Mammary epithelial cell (primary cell): ENCODE measurements at regions of chr14 and their contacts with region 1.

Region 1: DNA sequence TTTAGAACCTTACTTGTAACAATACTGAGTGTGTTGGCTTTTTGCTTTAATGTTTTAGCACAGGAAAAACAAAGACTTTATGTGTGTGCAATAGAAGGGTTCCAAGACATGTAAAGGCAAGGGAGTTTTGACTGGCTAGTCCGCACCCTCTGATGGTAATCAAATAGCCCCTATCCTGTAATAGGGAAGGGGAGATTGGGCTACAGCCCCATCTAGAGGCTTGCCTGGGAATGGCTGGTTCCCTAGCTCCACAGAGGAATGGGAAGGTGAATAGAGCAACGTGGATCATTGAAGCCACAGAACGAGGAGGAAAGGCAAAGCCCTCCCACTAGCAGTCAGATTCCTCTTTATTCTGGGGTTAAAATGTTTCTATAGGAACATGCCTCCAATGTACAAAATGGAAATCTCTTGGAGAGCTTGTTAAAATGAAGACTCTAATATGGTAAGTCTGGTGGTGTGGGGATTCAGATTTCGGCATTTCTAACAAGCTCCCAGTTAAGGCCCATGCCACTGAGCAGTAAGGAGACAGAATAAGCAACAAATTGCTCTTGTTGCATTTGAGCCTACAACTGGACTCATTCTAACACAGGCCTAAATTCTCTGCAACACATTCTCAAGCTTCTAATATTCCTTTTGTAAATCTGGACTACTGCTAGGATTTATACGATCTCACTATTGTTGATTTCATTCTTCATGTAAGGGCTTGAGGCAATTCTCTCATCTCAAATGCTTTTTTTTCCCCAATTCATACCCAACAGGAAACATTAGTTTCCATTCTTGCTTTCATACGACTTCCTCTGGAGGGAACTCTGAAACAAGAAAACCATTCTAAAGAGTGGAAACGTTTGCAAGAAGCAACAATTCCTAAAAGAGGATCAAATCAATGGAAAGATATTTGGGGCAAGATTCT is 57.1 kb downstream of the NIN start:
- DNase-seq: peak; percentile 59
- H3K4me3 ChIP-seq: no peak overlapping the region
- H3K27ac ChIP-seq: peak overlapping the region; percentile 9
- H3K4me1 ChIP-seq: peaks cover 43% of the 10 kb centered on the region
- H3K27me3 ChIP-seq: no peaks in the 10 kb centered on the region
- CTCF ChIP-seq: peak; percentile 92 to 97

Region 2: DNA sequence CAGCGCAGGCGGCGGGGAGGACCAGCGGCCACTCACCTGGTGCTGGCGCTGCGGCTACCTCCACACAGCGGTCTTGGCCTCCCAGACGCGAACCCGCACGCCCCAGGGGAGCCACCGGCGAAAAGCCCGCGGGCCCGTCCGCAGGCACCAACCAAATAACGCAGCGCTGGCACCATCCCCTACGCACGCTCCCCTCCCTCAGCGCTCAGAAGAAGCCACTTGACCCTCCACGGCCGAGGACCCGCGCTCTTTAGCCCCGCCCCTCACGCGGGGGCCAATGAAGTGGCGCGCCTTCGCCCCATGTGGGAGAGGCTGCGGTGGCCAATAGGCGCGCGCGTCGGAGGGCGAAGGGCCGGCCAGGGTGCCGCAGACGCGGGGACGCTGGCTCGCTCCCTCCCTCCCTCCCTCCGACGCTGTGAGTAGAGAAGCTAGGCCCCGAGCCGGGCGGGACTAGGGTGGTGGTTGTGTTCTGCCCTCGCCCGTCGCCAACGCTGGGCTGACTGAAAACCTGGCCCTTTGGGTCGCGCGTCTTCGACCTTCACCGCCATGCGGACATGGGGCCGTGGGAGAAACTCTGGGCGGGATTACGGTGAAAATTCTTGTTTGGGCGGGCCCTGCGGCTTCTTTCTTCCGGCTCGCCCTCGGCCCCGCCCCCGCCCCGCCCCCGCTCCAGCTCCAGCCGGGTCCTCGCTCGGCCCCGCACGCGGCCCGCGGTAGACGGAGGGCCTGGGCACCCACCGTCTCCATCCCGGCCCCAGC is 461.7 kb before region 1 on chr14 and contains the starts of genes DMAC2L and L2HGDH:
- CTCF ChIA-PET with region 1: no interaction called
- dilution Hi-C with region 1: no loop called
- in situ Hi-C with region 1: loop called (anchors 10 to 25 kb)
- intact Hi-C with region 1: no loop called
- DNase-seq: peak; percentile 95
- H3K4me3 ChIP-seq: peak within 1 kb of the TSS; percentile 89 to 99 (median 96)
- H3K27ac ChIP-seq: peak within 1 kb of the TSS; percentile 86
- H3K4me1 ChIP-seq: peaks cover 9% of the 10 kb centered on the region
- H3K27me3 ChIP-seq: no peaks in the 10 kb centered on the region
- CTCF ChIP-seq: no peak
- total RNA-seq, gene DMAC2L: 8.7 to 12.9 TPM
- total RNA-seq, gene L2HGDH: 5.2 to 9.4 TPM

Region 3: GRCh38 chr14:50342221-50343078 is 431.4 kb before region 1 on chr14:
- CTCF ChIA-PET with region 1: interaction called, 3 read pairs
- dilution Hi-C with region 1: no loop called
- in situ Hi-C with region 1: no loop called
- intact Hi-C with region 1: loop called (anchors 1 kb)
- DNase-seq: peak; percentile 75
- H3K4me3 ChIP-seq: no peak overlapping the region
- H3K27ac ChIP-seq: peak overlapping the region; percentile 5
- H3K4me1 ChIP-seq: peaks cover 32% of the 10 kb centered on the region
- H3K27me3 ChIP-seq: no peaks in the 10 kb centered on the region
- CTCF ChIP-seq: peak; percentile 41 to 75

Region 4: DNA sequence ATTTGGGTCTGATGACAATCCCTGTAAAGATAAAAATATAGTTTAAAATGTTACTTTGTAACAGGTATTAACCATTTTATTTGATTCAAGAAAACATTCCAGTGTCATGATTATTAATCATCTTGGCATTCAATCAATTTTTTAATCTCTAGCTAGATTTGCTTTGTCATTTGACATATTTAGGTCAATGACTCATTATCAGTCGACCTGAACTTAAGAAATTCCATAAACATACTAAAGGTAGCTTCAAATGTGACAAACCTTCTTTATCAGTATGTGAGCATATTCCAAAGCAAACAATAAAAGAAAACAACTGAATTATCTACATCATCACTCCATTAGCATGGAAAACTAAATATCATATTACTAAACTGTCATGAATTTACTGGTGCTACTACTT is 326.4 kb before region 1 on chr14:
- CTCF ChIA-PET with region 1: no interaction called
- dilution Hi-C with region 1: no loop called
- in situ Hi-C with region 1: no loop called
- intact Hi-C with region 1: no loop called
- DNase-seq: peak; percentile 65
- H3K4me3 ChIP-seq: no peak overlapping the region
- H3K27ac ChIP-seq: peak overlapping the region; percentile 66
- H3K4me1 ChIP-seq: peaks cover 10% of the 10 kb centered on the region
- H3K27me3 ChIP-seq: no peaks in the 10 kb centered on the region
- CTCF ChIP-seq: no peak

Region 5: DNA sequence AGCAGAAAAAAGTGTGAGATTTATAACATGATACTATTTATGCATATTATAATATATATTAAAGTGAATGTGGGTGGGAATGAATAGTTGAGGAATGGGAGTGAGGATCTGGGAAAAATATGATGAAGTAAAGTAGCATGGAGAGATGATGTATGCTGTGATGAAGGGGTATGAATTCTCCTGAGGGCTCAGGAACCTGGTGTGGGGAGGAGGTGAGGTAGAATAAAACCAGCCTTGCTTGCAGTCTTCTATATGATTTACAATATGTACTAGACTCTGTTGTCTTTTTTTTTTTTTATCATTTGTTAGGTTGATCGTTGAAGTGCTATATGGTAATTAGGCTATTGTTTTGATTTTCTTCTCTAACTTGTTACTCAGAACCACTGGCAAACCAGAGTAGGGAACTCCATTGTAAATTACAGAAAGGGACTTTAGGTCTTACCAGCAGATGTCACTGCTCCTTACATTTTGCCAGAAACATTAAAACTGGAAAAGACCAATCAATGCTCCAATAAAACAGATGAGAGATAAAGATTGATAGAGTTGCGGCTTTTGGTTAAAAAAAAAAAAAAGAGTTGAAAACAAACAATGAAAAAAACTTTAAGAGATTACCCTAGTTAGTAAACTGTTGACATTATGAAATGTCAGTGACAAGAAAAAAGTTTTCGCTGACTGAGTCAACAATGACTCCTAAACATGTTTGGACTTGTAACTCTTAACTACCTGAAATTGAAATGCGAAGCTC is 174.0 kb before region 1 on chr14:
- CTCF ChIA-PET with region 1: interaction called, 10 read pairs
- dilution Hi-C with region 1: no loop called
- in situ Hi-C with region 1: no loop called
- intact Hi-C with region 1: loop called (anchors 1 kb)
- DNase-seq: peak; percentile 76
- H3K4me3 ChIP-seq: peak overlapping the region in 1 of 3 experiments; percentile 32
- H3K27ac ChIP-seq: peak overlapping the region; percentile 61
- H3K4me1 ChIP-seq: peaks cover 27% of the 10 kb centered on the region
- H3K27me3 ChIP-seq: no peaks in the 10 kb centered on the region
- CTCF ChIP-seq: peak; percentile 55 to 59

Region 6: DNA sequence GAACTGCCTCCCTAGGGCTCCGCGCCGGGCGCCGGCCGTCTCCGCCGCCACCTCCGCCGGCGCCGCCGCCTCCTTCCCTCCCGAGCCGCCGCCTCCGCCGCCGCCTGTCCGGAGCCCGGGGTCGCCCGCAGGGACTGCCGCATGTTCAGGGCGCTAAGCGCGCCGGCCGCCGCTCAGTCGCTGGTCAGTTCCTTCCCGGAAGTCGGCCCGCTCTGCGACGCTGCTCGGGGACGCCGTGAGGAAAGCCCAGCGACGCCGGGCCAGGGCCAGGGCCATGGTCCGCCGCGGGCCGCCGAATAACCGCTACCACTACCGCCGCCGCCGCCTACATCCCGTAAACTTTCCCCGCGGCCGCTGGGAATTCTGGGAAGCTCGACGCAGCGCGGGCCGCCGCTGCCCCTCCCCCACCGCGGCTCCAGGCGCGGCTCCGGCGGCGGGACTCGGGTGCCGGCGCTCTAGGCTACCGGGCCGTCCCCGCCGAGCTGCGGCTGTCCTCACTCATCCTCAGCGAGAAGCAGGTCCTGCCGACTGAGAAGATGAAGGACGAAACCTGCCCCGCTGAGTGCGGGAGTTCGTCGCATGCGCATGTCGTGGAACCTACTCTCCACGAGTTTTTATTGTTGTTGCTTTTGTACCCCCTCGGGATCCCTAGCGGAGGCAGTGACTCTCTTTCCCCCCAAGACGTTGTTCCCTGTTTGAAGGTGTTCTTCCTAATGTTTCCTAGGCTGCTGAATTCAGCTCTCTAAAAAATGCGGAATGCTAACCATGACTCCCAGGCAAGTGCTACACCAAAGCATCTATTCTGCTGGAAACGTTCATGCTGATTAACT is 105.7 kb before region 1 on chr14 and contains the start of gene SAV1:
- CTCF ChIA-PET with region 1: no interaction called
- dilution Hi-C with region 1: no loop called
- in situ Hi-C with region 1: no loop called
- intact Hi-C with region 1: loop called (anchors 2 kb)
- DNase-seq: peak; percentile 81
- H3K4me3 ChIP-seq: peak within 1 kb of the TSS; percentile 73 to 91 (median 82)
- H3K27ac ChIP-seq: peak within 1 kb of the TSS; percentile 92
- H3K4me1 ChIP-seq: peaks cover 20% of the 10 kb centered on the region
- H3K27me3 ChIP-seq: no peaks in the 10 kb centered on the region
- CTCF ChIP-seq: peak in 1 of 2 donors; percentile 4
- total RNA-seq, gene SAV1: 53.3 to 63.5 TPM

Region 7: DNA sequence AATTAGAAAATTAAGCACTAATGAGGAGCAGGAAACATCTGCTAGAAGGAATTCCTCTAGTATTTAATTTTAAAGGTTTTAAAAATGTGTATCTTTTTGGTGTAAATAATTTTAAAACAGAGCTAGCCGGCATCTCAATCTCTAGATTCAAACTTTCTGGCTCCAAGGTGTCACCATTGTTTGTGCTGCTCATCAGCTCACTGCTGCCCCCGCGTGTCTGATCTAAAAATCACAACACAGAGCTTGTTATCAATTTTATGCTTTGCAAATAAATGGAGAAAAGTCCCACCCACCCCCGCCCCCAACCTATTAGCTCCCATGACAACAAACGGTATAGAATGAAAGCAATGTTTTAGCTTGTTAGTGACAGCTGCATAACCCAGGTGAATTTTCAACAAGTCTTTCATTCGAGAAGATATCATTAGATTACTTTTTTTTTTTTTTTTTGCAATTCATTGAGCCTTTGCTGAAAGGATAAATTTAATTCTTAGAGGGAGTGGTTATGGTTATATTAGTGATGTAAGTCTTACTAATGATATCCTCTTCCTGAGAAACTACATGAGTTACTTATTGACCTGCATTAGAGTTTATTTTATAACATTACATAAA is 86.7 kb after region 1 on chr14:
- CTCF ChIA-PET with region 1: interaction called, 14 read pairs
- dilution Hi-C with region 1: no loop called
- in situ Hi-C with region 1: loop called in 1 of 2 experiments (anchors 5 kb)
- intact Hi-C with region 1: loop called (anchors 1 kb)
- DNase-seq: peak; percentile 56
- H3K4me3 ChIP-seq: peak overlapping the region; percentile 41 to 58 (median 54)
- H3K27ac ChIP-seq: peak overlapping the region; percentile 52
- H3K4me1 ChIP-seq: peaks cover 6% of the 10 kb centered on the region
- H3K27me3 ChIP-seq: no peaks in the 10 kb centered on the region
- CTCF ChIP-seq: peak; percentile 57 to 72